Body of pancreas (tissue), 4 donors: ENCODE measurements at regions of chr4 and their contacts with region 1.

Region 1: GRCh38 chr4:113773014-113773413 is 11.5 kb upstream of the CAMK2D start:
- DNase-seq: no peak
- ATAC-seq: no peak
- H3K4me3 ChIP-seq: no peak overlapping the region
- H3K27ac ChIP-seq: no peak overlapping the region
- H3K4me1 ChIP-seq: no peaks in the 10 kb centered on the region
- H3K27me3 ChIP-seq: no peaks in the 10 kb centered on the region
- CTCF ChIP-seq: no peak
- POLR2A ChIP-seq: no peak

Region 2: DNA sequence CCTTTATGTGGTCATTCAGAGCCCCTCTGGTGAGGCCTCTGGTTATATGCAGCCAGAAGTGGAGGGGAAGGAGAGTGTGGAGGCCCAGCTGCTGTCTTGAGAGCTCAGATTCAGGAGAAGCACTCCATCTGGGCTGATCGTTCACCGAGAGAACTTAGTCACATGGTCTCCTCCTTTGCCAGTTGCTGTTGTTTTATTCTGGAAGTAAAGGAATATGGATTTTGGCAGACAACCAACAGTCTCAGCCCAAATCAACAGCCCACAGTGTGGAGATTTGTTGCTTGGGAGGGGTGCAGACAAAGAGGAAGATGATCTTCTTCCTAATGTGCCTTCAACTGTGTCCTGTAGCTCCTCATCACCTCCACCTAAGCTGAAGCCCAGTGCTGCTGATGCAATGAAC is 368.2 kb before region 1 on chr4:
- intact Hi-C with region 1: loop called (anchors 10 kb)
- DNase-seq: no peak
- ATAC-seq: no peak
- H3K4me3 ChIP-seq: no peak overlapping the region
- H3K27ac ChIP-seq: no peak overlapping the region
- H3K4me1 ChIP-seq: no peaks in the 10 kb centered on the region
- H3K27me3 ChIP-seq: no peaks in the 10 kb centered on the region
- CTCF ChIP-seq: no peak
- POLR2A ChIP-seq: no peak

Region 3: DNA sequence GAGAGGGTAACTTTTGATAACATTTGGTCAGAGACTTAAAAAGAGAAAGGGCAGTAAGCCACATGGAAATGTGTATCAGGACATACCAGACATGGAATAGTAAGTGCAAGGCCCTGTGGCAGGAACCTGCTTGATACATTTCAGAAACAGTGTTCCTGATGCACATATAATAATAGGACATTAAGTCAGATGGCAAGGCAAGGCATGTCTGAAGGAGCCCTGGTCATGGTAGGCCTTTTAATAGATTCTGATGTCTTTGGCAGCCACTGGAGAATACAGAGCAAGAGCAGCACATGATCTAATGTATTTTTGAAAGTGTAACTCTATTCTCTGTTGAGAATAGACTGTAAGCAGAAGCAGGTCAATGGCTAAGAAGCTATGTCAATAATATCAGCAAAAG is 291.2 kb before region 1 on chr4:
- intact Hi-C with region 1: no loop called
- DNase-seq: no peak
- ATAC-seq: no peak
- H3K4me3 ChIP-seq: no peak overlapping the region
- H3K27ac ChIP-seq: no peak overlapping the region
- H3K4me1 ChIP-seq: no peaks in the 10 kb centered on the region
- H3K27me3 ChIP-seq: no peaks in the 10 kb centered on the region
- CTCF ChIP-seq: no peak
- POLR2A ChIP-seq: no peak